Right ventricle myocardium inferior (tissue), 1 donor: ENCODE measurements at regions of chr4 and their contacts with region 1.

Region 1: GRCh38 chr4:99563310-99564186 is at the start of gene TRMT10A:
- DNase-seq: peak; percentile 98
- ATAC-seq: peak; percentile 99
- total RNA-seq, gene TRMT10A: 3.5 TPM

Region 2: DNA sequence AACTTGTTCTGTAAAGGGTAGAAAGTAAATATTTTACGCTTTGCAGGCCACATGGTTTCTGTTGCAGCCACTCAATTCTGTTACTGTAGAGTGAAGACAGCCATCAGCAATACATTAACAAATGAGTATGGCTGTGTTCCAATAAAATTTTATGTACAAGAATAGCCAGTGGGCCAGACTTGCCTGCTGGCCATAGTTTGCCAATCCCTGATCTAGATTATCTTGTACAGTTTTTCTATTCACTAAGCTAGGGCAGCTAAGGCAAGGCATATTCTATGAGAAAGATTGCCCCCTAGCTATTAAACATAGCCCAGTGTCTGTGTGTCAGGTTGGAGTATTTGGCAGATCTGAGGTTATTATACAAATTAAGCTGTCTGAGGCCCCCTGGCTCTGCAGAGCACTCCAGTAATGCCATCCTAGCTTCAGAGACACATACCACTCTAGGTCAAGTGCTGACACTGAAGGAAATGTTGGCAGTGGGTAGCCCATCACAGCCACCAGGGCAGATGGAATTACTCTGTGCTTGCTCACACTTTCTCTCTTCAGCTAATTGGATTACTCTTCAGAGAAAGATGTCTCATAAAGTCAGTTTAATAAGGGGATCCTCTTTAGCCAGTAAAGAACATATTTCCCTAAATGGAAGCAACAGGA is 51.7 kb after region 1 on chr4:
- intact Hi-C with region 1: loop called (anchors 5 kb)
- DNase-seq: peak; percentile 40
- ATAC-seq: peak; percentile 91

Region 3: GRCh38 chr4:99665983-99666382 is 102.4 kb after region 1 on chr4:
- intact Hi-C with region 1: loop called (anchors 5 kb)
- DNase-seq: no peak
- ATAC-seq: no peak

Region 4: DNA sequence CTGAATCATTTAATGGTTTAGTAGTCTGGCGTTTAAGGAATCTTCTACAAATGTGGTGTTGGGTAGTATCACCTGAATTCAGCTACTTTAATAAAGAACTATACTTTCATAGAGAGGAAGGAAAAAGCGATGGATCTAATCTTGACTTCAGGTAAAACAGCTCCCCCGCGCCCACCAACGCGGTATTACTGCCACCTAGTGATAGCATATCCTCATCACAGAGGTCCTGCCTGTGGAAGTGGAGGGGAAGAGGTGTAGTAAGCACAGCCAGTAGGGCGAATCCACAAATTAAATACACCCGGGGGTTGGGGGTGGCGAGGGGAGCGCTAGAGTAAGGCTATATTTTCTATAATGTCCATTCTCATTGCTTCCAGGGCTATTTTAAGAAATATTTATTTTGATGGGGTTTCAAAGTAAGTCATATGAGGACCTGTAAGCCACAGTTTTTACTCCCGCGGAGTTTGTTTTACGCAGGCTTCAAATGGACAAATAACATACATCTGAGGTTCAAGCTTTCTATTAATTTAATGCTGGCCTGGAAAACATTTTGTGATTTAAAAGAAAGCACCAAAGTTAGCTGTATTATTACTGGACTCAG is 244.8 kb after region 1 on chr4:
- intact Hi-C with region 1: loop called (anchors 1 kb)
- DNase-seq: peak; percentile 83
- ATAC-seq: peak; percentile 77

Region 5: GRCh38 chr4:99949034-99949998 is 385.8 kb after region 1 on chr4:
- intact Hi-C with region 1: loop called (anchors 2 kb)
- DNase-seq: peak; percentile 95
- ATAC-seq: peak; percentile 37